ENCODE measurements at regions of chr7 and their contacts with region 1.

Region 1: GRCh38 chr7:79298145-79298760 is 155.2 kb downstream of the MAGI2 start:
- DNase-seq: peak; percentile 31
- H3K4me3 ChIP-seq: no peak overlapping the region
- H3K27ac ChIP-seq: peak overlapping the region; percentile 87
- H3K4me1 ChIP-seq: peaks cover 37% of the 10 kb centered on the region
- H3K27me3 ChIP-seq: no peaks in the 10 kb centered on the region
- CTCF ChIP-seq: peak; percentile 69 to 77

Region 2: DNA sequence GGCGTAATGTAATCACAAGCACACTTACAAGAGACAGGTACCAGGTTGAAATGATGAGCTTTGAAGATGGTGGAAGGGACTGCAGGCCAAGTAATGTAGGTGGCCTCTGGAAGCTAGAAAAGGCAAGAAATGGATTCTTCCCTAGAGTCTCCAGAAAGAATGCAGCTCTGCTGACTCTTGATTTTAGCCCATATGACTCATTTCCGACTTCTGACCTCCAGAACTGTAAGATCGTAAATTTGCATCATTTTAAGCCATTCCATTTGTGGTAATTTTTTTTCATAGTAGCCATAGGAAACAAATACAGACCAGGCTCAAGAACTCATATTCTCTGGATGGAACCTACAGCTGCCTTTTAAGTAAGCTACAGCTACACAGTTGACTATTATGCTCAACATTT is 160.3 kb before region 1 on chr7:
- CTCF ChIA-PET with region 1: no interaction called
- dilution Hi-C with region 1: no loop called
- in situ Hi-C with region 1: no loop called
- intact Hi-C with region 1: no loop called
- DNase-seq: no peak
- H3K4me3 ChIP-seq: no peak overlapping the region
- H3K27ac ChIP-seq: no peak overlapping the region
- H3K4me1 ChIP-seq: no peaks in the 10 kb centered on the region
- H3K27me3 ChIP-seq: no peaks in the 10 kb centered on the region
- CTCF ChIP-seq: no peak

Region 3: GRCh38 chr7:79282063-79282694 is 16.1 kb before region 1 on chr7:
- CTCF ChIA-PET with region 1: interaction called, 12 read pairs
- dilution Hi-C with region 1: no loop called
- in situ Hi-C with region 1: no loop called
- intact Hi-C with region 1: loop called (anchors 2 kb)
- DNase-seq: peak; percentile 27
- H3K4me3 ChIP-seq: no peak overlapping the region
- H3K27ac ChIP-seq: peak overlapping the region; percentile 76
- H3K4me1 ChIP-seq: peaks cover 38% of the 10 kb centered on the region
- H3K27me3 ChIP-seq: no peaks in the 10 kb centered on the region
- CTCF ChIP-seq: peak; percentile 24 to 56

Region 4: GRCh38 chr7:79361214-79361613 is 63.0 kb after region 1 on chr7:
- CTCF ChIA-PET with region 1: no interaction called
- dilution Hi-C with region 1: no loop called
- in situ Hi-C with region 1: no loop called
- intact Hi-C with region 1: loop called (anchors 2 kb)
- DNase-seq: peak; percentile 12
- H3K4me3 ChIP-seq: no peak overlapping the region
- H3K27ac ChIP-seq: no peak overlapping the region
- H3K4me1 ChIP-seq: no peaks in the 10 kb centered on the region
- H3K27me3 ChIP-seq: no peaks in the 10 kb centered on the region
- CTCF ChIP-seq: peak; percentile 41 to 44

Region 5: GRCh38 chr7:79452032-79452494 is 153.8 kb after region 1 on chr7:
- CTCF ChIA-PET with region 1: no interaction called
- dilution Hi-C with region 1: no loop called
- in situ Hi-C with region 1: no loop called
- intact Hi-C with region 1: loop called (anchors 10 kb)
- DNase-seq: peak; percentile 48
- H3K4me3 ChIP-seq: peak overlapping the region; percentile 50 to 58 (median 57)
- H3K27ac ChIP-seq: peak overlapping the region; percentile 65
- H3K4me1 ChIP-seq: peaks cover 26% of the 10 kb centered on the region
- H3K27me3 ChIP-seq: no peaks in the 10 kb centered on the region
- CTCF ChIP-seq: no peak

Region 6: GRCh38 chr7:79495544-79496272 is 197.5 kb after region 1 on chr7:
- CTCF ChIA-PET with region 1: no interaction called
- dilution Hi-C with region 1: no loop called
- in situ Hi-C with region 1: no loop called
- intact Hi-C with region 1: loop called (anchors 5 kb)
- DNase-seq: peak; percentile 73
- H3K4me3 ChIP-seq: no peak overlapping the region
- H3K27ac ChIP-seq: peak overlapping the region; percentile 85
- H3K4me1 ChIP-seq: peaks cover 9% of the 10 kb centered on the region
- H3K27me3 ChIP-seq: no peaks in the 10 kb centered on the region
- CTCF ChIP-seq: no peak

Region 7: DNA sequence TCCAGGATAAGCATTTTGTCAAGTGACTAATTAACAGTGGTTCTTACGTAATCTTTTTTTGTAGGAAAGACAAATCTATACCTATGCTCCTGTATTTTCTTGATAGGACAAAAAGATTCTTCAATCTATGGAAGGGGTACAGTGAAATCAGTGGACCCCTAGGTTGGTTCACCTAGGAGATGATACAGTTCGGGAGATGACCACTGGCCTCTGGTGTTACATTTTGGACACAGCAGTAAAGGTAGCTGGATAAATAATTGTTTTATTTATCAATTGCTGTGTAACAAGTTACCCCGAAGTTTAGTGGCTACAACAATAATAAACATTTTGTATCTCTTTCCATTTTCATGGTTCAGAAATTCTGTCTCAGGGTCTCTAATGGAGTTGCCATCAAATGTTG is 443.4 kb after region 1 on chr7:
- CTCF ChIA-PET with region 1: interaction called, 4 read pairs
- dilution Hi-C with region 1: no loop called
- in situ Hi-C with region 1: no loop called
- intact Hi-C with region 1: loop called (anchors 2 kb)
- DNase-seq: no peak
- H3K4me3 ChIP-seq: no peak overlapping the region
- H3K27ac ChIP-seq: no peak overlapping the region
- H3K4me1 ChIP-seq: no peaks in the 10 kb centered on the region
- H3K27me3 ChIP-seq: no peaks in the 10 kb centered on the region
- CTCF ChIP-seq: peak; percentile 42 to 56

Region 8: GRCh38 chr7:79868010-79868409 is 569.8 kb after region 1 on chr7:
- CTCF ChIA-PET with region 1: no interaction called
- dilution Hi-C with region 1: no loop called
- in situ Hi-C with region 1: no loop called
- intact Hi-C with region 1: no loop called
- DNase-seq: no peak
- H3K4me3 ChIP-seq: no peak overlapping the region
- H3K27ac ChIP-seq: no peak overlapping the region
- H3K4me1 ChIP-seq: no peaks in the 10 kb centered on the region
- H3K27me3 ChIP-seq: peaks cover 11% of the 10 kb centered on the region
- CTCF ChIP-seq: no peak

Region 9: DNA sequence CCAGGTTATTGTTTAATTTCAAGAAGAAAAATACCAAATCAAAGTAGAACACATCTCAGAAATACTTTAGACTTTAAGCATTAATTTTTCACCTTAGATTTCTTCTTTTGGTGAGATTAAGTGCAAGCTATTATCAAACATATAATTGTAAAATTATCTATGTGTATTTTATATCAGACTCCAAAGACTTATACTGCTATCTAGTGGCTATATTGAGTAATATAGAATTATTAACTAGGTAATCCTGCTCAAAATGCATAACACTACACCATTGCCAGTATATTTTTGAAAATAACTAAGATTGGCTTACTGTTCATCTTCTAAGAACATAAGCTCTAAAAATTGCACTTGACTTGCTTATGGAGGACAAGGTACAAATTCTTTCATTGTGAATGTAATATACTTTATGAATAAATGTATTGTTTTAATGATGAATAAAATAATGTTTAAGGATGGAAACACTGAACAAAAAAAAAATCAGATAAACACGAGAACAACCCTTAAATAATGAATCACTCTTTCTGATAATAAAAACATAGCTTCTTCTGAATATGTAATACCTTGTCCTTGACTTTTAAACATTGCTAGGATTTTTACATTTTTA is 749.7 kb after region 1 on chr7:
- CTCF ChIA-PET with region 1: no interaction called
- dilution Hi-C with region 1: no loop called
- in situ Hi-C with region 1: loop called in 1 of 2 experiments (anchors 25 kb)
- intact Hi-C with region 1: loop called (anchors 10 kb)
- DNase-seq: no peak
- H3K4me3 ChIP-seq: no peak overlapping the region
- H3K27ac ChIP-seq: no peak overlapping the region
- H3K4me1 ChIP-seq: no peaks in the 10 kb centered on the region
- H3K27me3 ChIP-seq: peaks cover 2% of the 10 kb centered on the region
- CTCF ChIP-seq: peak; percentile 23 to 48